Heart right ventricle (tissue), 16 donors: ENCODE measurements at regions of chr9 and their contacts with region 1.

Region 1: GRCh38 chr9:127396808-127397497 is at the start of gene SLC2A8:
- DNase-seq: peak; percentile 97 to 99
- ATAC-seq: peak; percentile 96 to 99 (median 98)
- H3K4me3 ChIP-seq: peak within 1 kb of the TSS; percentile 72 to 95 (median 86)
- H3K27ac ChIP-seq: peak within 1 kb of the TSS; percentile 32 to 91 (median 88)
- H3K4me1 ChIP-seq: peaks cover 0 to 24% (median 20%) of the 10 kb centered on the region in 9 donors
- H3K27me3 ChIP-seq: no peaks in the 10 kb centered on the region
- CTCF ChIP-seq: peak in 6 of 9 donors; percentile 13 to 49 (median 24)
- total RNA-seq, gene SLC2A8: 10.0 to 26.7 (median 13.1) TPM

Region 2: DNA sequence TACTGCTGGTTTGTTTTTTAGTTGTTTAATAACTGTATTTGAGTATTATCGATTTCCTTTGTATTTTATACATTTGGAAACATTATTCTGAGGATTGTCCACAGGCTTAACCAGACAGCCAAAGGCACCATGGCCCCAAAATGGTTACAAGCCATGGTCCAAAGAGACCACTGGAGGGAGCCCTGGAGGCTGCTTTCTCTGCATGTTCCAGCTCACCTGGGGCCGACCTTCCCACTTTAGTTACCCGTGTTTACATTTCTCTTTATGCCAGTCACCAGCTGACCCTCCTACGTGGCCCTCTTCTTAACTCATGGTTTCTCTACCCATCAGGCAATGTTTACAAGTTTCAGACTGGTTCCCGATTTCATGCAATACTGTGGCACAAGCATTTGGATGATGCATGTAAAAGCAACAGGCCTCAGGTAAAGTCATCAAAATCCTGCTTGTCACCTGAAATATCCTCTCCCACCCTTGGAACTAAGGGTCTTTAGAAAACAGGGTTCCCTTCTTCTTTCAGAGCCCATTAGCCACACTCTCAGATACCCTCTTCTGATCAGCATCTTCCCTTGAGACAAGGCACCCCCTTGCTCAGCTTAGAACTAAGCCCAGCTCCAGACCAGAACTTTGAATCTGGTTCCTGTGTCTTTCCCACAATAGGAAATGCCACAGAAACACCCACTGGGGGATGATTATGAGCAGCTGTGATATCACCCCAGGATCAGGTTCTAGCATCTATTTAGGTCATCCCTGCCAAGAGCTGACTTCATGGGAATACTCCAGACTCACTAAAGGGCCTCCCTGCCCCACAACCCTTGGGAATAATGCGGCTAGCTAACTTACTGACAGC is 182.3 kb before region 1 on chr9:
- intact Hi-C with region 1: loop called in 2 of 10 experiments (anchors 5 to 10 kb)
- DNase-seq: peak in 1 of 2 donors; percentile 52
- ATAC-seq: peak in 6 of 8 donors; percentile 9 to 61 (median 46)
- H3K4me3 ChIP-seq: no peak overlapping the region
- H3K27ac ChIP-seq: no peak overlapping the region
- H3K4me1 ChIP-seq: peaks cover 0 to 11% (median 0%) of the 10 kb centered on the region in 9 donors
- H3K27me3 ChIP-seq: no peaks in the 10 kb centered on the region
- CTCF ChIP-seq: peak; percentile 56 to 80 (median 76)

Region 3: GRCh38 chr9:127233550-127233949 is 163.4 kb before region 1 on chr9:
- intact Hi-C with region 1: loop called in 1 of 10 experiments (anchors 5 kb)
- DNase-seq: no peak
- ATAC-seq: peak in 1 of 8 donors; percentile 26
- H3K4me3 ChIP-seq: no peak overlapping the region
- H3K27ac ChIP-seq: peak overlapping the region in 4 of 10 donors; percentile 22 to 59 (median 44)
- H3K4me1 ChIP-seq: peaks cover 0 to 27% (median 11%) of the 10 kb centered on the region in 9 donors
- H3K27me3 ChIP-seq: no peaks in the 10 kb centered on the region
- CTCF ChIP-seq: no peak

Region 4: GRCh38 chr9:127263664-127264063 is 133.3 kb before region 1 on chr9:
- intact Hi-C with region 1: no loop called
- DNase-seq: peak in 1 of 2 donors; percentile 50
- ATAC-seq: peak in 6 of 8 donors; percentile 50 to 83 (median 74)
- H3K4me3 ChIP-seq: peak overlapping the region in 6 of 10 donors; percentile 25 to 49 (median 44)
- H3K27ac ChIP-seq: peak overlapping the region in 6 of 10 donors; percentile 63 to 80 (median 72)
- H3K4me1 ChIP-seq: peaks cover 0 to 47% (median 21%) of the 10 kb centered on the region in 9 donors
- H3K27me3 ChIP-seq: no peaks in the 10 kb centered on the region
- CTCF ChIP-seq: no peak

Region 5: GRCh38 chr9:127311239-127311741 is 85.7 kb before region 1 on chr9:
- intact Hi-C with region 1: loop called in 4 of 10 experiments (anchors 2 to 10 kb)
- DNase-seq: peak in 1 of 2 donors; percentile 58
- ATAC-seq: peak in 6 of 8 donors; percentile 8 to 64 (median 57)
- H3K4me3 ChIP-seq: no peak overlapping the region
- H3K27ac ChIP-seq: peak overlapping the region; percentile 8 to 83 (median 58)
- H3K4me1 ChIP-seq: peaks cover 0 to 64% (median 36%) of the 10 kb centered on the region in 9 donors
- H3K27me3 ChIP-seq: no peaks in the 10 kb centered on the region
- CTCF ChIP-seq: peak; percentile 45 to 71 (median 61)

Region 6: DNA sequence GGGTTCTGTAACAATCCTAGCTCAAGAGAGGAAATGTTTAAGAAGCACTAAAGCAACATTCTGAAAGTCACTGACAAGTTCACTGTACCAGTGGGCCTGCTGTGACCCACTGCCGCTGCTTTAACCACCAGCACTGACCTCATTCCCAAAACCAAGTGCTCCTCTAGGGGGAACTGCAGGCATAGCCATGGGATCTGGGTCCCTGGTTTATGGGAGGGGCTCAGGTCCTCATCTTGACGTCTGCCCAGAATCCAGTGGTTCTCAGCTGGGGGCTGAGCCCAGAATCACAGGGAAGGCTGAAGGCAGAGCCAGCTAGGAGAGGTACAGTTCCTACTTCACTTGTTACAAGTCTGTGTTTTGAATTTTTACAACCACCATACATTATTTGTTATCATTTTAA is 36.1 kb before region 1 on chr9:
- intact Hi-C with region 1: loop called in 1 of 10 experiments (anchors 5 kb)
- DNase-seq: no peak
- ATAC-seq: peak in 2 of 8 donors; percentile 22 to 44
- H3K4me3 ChIP-seq: no peak overlapping the region
- H3K27ac ChIP-seq: no peak overlapping the region
- H3K4me1 ChIP-seq: peaks cover 0 to 16% (median 0%) of the 10 kb centered on the region in 9 donors
- H3K27me3 ChIP-seq: no peaks in the 10 kb centered on the region
- CTCF ChIP-seq: peak in 3 of 9 donors; percentile 3 to 8 (median 6)

Region 7: DNA sequence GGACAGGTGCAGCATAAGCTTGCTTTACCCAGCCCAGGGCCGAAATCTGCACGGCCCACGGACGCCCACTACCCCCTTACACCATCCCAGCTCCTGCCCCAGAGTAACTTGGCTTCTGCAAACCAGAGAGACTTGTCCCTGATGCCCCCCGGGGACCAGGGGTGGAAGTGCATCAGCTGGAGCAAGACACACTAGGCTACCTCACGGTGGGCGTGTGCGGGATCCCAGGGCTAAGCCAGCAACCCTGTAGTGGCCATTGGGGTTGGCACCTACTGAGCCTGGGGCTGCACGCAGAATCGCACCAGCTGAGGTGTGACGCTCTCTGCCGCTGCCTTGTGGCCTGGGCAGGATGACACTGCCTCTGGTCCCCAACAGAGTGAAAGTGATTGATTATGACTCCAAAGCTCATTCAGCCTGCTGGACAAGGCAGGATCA is 21.1 kb after region 1 on chr9:
- intact Hi-C with region 1: loop called in 1 of 10 experiments (anchors 1 kb)
- DNase-seq: no peak
- ATAC-seq: peak in 4 of 8 donors; percentile 29 to 64 (median 54)
- H3K4me3 ChIP-seq: no peak overlapping the region
- H3K27ac ChIP-seq: no peak overlapping the region
- H3K4me1 ChIP-seq: peaks cover 2 to 22% (median 11%) of the 10 kb centered on the region in 9 donors
- H3K27me3 ChIP-seq: no peaks in the 10 kb centered on the region
- CTCF ChIP-seq: peak in 5 of 9 donors; percentile 17 to 37 (median 26)

Region 8: DNA sequence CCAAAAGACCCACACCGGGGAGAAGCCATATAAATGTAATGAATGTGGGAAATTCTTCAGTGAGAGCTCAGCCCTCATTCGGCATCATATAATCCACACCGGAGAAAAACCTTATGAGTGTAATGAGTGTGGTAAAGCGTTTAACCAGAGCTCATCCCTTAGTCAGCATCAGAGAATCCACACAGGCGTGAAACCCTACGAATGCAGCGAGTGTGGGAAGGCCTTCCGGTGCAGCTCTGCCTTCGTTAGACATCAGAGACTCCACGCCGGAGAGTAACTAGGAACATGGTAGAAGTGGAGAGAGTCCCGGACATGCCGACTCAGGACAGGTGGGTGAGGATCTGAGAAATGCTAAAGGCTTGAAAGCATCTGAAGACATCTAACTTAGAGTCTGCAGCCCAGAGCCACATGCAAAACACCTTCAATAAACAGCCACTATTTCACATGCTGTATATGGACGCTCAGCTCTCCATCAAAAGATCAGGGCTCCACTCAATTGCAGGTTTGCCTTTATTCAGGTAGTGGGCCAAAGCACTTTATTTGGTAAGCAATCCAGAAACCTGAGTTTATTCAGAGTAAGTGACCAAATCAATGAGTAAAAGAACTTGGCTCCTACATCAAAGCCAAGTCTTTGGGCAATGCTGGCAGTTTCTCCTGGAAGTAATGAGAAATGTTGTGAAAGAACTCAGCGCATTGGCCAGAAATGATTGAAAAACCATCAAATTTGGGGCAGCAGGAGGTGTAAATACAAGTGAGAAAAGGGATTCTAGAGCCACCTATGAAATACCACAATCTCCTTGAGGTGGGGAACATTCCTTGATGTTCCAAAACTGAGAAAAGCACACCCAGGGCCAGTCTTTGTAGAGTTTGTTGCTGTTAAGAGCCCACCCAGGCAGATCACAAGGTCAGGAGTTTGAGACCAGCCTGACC is 48.2 kb after region 1 on chr9:
- intact Hi-C with region 1: no loop called
- DNase-seq: no peak
- ATAC-seq: no peak
- H3K4me3 ChIP-seq: no peak overlapping the region
- H3K27ac ChIP-seq: no peak overlapping the region
- H3K4me1 ChIP-seq: peaks cover 3 to 24% (median 18%) of the 10 kb centered on the region in 9 donors
- H3K27me3 ChIP-seq: no peaks in the 10 kb centered on the region
- CTCF ChIP-seq: no peak

Region 9: DNA sequence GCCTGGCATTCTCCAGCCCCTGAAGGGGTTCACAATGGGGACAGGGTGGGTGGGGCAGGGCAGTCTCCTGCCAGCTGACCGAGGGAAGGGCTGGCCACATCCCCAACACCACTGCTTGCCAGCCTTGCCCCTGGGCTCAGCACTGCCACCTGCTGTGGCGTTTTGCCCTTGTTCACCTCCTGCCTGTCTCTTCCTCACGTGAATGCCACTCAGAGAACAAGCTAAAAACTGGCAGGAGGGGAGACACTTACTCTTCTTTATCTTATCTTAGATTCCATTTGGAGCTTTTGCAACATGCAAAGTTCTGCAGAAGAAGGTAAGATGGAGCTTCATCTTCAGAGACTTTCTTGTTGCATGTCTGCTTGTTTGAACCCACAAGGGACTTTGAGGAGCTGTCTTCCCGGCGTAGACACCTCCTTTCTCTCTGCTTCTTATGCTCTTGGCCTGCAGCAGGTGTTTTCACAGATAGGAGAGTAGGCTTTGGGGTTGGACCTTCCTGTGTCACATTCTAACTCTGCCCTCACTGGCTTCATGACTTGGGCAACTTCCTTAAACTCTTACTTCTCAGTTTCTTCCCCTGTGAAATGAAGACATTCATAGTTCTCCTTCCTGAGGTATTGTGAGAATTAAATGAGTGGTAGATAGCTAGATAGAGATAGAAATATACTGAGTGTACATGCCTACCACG is 58.5 kb after region 1 on chr9:
- intact Hi-C with region 1: no loop called
- DNase-seq: peak in 1 of 2 donors; percentile 46
- ATAC-seq: no peak
- H3K4me3 ChIP-seq: no peak overlapping the region
- H3K27ac ChIP-seq: peak overlapping the region in 3 of 10 donors; percentile 20 to 63 (median 39)
- H3K4me1 ChIP-seq: peaks cover 0 to 40% (median 31%) of the 10 kb centered on the region in 9 donors
- H3K27me3 ChIP-seq: no peaks in the 10 kb centered on the region
- CTCF ChIP-seq: peak in 7 of 9 donors; percentile 34 to 53 (median 45)